ENCODE measurements at regions of chr11 and their contacts with region 1.

Region 1: DNA sequence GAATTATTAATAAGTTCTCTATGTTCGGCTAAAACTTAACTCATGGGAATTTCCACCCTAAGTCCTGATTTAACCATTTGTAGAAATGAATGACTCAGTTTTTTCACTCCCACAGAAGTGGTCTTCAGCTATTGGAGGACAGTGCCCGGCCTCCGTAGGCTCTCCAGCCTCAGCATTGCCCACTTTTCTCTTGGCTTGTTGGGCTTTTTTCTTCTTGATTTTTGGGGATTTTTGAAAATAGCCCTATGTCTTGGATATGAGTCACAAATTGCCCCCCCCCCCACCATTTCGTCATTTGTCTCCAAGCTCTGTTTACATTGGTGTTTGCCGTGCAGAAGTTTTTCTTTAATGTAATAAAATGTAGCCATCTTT is 66.7 kb downstream of the PACS1 start:
- DNase-seq: peak; percentile 40
- ATAC-seq: 0 out of 2 replicates have a peak, but pooled peaks have one; percentile 9
- H3K4me3 ChIP-seq: no peak overlapping the region
- H3K27ac ChIP-seq: peak overlapping the region; percentile 3; the same call in 1 of the 2 replicates
- H3K4me1 ChIP-seq: peaks cover 16% of the 10 kb centered on the region
- H3K27me3 ChIP-seq: no peaks in the 10 kb centered on the region
- CTCF ChIP-seq: no peak

Region 2: GRCh38 chr11:65961232-65961901 is 175.4 kb before region 1 on chr11 and contains the start of gene SART1:
- CTCF ChIA-PET with region 1: no interaction called
- POLR2A ChIA-PET with region 1: interaction called, 10 read pairs
- intact Hi-C with region 1: no loop called
- DNase-seq: peak; percentile 98
- ATAC-seq: peak; percentile 96
- H3K4me3 ChIP-seq: peak within 1 kb of the TSS; percentile 95
- H3K27ac ChIP-seq: peak within 1 kb of the TSS; percentile 66
- H3K4me1 ChIP-seq: peaks cover 8% of the 10 kb centered on the region
- H3K27me3 ChIP-seq: no peaks in the 10 kb centered on the region
- CTCF ChIP-seq: no peak
- total RNA-seq, gene SART1: 240 and 267 TPM in 2 replicates

Region 3: GRCh38 chr11:66069715-66070603 is 66.8 kb before region 1 on chr11 and contains the start of gene PACS1:
- CTCF ChIA-PET with region 1: interaction called, 3 read pairs
- POLR2A ChIA-PET with region 1: no interaction called
- intact Hi-C with region 1: loop called (anchors 2 kb)
- DNase-seq: peak; percentile 81
- ATAC-seq: peak; percentile 73
- H3K4me3 ChIP-seq: peak within 1 kb of the TSS; percentile 83
- H3K27ac ChIP-seq: no peak within 1 kb of the TSS
- H3K4me1 ChIP-seq: peaks cover 25% of the 10 kb centered on the region
- H3K27me3 ChIP-seq: no peaks in the 10 kb centered on the region
- CTCF ChIP-seq: no peak; the same call in 1 of the 2 replicates
- total RNA-seq, gene PACS1: 28.7 and 31.5 TPM in 2 replicates

Region 4: DNA sequence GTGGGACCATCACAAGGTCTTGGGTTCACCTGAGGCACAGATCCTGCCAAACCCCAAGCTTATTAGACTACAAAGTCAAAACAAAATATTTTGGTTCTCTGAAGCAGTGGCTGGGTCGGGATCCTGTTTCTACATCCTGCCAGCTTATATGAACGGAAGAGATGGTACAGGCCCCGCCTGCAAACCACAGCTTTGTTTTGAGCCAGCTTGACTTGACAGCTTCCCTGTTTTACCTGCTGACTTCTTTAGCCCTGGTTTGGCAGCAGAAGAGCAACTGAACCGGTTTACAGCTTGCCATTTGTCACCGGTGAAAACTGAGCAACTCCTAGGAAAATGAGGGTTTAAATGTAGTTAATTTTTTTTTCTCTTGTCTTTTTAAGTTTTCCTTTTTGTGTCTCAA is 55.2 kb before region 1 on chr11:
- CTCF ChIA-PET with region 1: interaction called, 9 read pairs
- POLR2A ChIA-PET with region 1: no interaction called
- intact Hi-C with region 1: loop called (anchors 2 kb)
- DNase-seq: peak; percentile 91
- ATAC-seq: peak; percentile 81
- H3K4me3 ChIP-seq: peak overlapping the region; percentile 46
- H3K27ac ChIP-seq: peak overlapping the region; percentile 17
- H3K4me1 ChIP-seq: peaks cover 41% of the 10 kb centered on the region
- H3K27me3 ChIP-seq: no peaks in the 10 kb centered on the region
- CTCF ChIP-seq: no peak

Region 5: DNA sequence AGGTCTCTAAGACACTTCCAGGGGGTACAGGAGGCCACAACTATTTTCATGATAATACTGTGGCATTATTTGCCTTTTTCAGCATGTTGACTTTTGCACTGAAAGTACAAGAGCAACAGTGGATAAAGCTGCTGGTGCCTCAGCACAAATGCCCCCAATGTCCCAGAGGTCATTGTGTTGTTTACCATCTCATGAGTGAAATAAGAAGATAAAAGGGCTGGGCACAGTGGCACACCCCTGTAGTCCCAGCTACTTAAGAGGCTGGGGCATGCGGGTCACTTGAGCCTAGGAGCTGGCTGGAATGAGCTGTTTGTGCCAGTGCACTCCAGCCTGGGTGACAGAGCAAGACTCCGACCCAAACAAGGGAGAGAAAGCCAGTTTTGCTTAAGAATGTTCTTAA is 59.1 kb after region 1 on chr11:
- CTCF ChIA-PET with region 1: no interaction called
- POLR2A ChIA-PET with region 1: no interaction called
- intact Hi-C with region 1: no loop called
- DNase-seq: no peak
- ATAC-seq: peak; percentile 39; the same call in 1 of the 2 replicates
- H3K4me3 ChIP-seq: no peak overlapping the region
- H3K27ac ChIP-seq: no peak overlapping the region
- H3K4me1 ChIP-seq: peaks cover 21% of the 10 kb centered on the region
- H3K27me3 ChIP-seq: no peaks in the 10 kb centered on the region
- CTCF ChIP-seq: no peak